PC-9 (cell line): ENCODE measurements at regions of chr5 and their contacts with region 1.

Region 1: GRCh38 chr5:154445422-154446182 is at the start of gene SAP30L:
- DNase-seq: peak; percentile 83 to 99
- H3K4me3 ChIP-seq: peak within 1 kb of the TSS; percentile 95
- H3K27ac ChIP-seq: no peak within 1 kb of the TSS
- H3K4me1 ChIP-seq: peaks cover 32% of the 10 kb centered on the region
- H3K27me3 ChIP-seq: no peaks in the 10 kb centered on the region
- CTCF ChIP-seq: no peak
- total RNA-seq, gene SAP30L: 42.8 and 53.0 TPM in 2 replicates

Region 2: DNA sequence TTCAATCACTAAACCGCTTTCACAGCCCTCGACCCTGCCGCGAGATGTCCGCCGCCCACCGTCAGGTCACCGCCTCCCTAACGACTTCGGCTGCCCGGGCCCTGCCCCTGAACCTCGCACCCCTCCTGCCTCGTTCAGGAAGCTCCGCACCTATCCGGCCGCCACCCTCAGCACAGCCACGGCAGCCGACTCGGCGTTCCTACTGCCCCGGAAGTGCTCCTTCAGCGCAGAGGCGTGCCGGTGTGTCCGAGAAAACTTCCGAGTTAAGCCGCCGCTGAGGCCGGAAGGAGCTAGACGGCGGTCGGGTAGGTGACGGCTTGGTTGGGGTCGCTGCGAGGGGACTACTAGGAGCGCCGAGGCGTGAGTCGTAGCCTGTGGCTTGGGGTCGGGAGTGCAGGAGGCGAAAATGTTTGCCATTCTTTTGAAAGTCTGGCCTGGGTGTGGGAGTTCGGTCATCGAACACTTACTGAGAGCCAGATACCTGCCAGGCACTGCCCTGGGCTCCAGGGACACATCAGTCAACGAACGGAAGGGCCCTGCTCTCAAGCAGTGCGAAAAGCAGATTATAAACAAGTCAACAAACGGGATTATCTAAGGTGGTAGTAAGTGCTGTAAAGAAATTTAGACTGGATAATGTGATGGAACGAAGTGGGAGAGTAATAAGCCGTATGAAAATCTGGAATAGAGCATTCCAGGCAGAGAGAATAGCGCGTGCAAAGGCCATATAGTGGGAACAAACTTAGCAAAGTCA is 406.7 kb before region 1 on chr5 and contains the starts of genes FAM114A2 and MFAP3:
- CTCF ChIA-PET with region 1: no interaction called
- POLR2A ChIA-PET with region 1: no interaction called
- intact Hi-C with region 1: loop called (anchors 1 kb)
- DNase-seq: peak; percentile 84 to 90
- H3K4me3 ChIP-seq: peak within 1 kb of the TSS; percentile 85
- H3K27ac ChIP-seq: peak within 1 kb of the TSS; percentile 52
- H3K4me1 ChIP-seq: peaks cover 20% of the 10 kb centered on the region
- H3K27me3 ChIP-seq: no peaks in the 10 kb centered on the region
- CTCF ChIP-seq: no peak
- total RNA-seq, gene FAM114A2: 17.1 and 18.9 TPM in 2 replicates
- total RNA-seq, gene MFAP3: 24.4 and 29.3 TPM in 2 replicates

Region 3: DNA sequence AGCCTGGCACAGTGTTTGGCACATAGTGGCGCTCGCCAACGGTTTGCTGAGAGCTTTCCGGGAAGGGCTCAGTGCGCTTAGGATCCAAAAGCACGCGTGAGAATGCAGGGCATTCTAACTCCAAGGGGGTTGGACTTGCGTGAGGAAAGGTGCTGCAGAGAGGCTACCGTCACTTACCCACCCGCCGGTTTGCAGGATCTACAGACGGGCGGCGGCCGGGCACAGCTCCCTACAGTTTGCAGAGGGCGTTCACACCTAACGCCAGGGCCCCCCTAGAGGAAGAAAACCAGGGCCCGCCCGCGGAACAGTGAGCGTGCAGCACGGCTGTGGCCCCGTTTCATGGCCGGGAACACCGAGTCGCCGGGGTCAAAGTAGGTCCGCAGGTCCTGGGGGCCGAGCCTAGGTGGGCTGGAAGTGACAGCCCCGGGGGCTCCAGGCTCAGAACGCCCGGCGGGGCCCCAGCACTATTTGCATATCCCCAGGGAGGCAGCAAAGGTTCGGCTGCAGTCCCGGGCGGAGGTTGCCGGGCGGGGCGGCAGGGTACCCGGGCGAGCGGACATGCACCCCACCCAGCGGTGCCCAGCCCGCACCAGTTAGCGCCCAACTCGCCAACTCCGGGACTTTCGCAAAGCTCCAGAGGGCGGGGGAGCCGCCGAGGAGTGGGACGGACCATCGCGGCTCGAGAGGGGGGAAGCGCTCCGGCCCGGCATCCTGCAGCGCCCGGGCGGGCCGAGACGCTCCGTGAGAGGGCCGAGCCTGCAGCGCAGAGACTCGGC is 255.6 kb before region 1 on chr5:
- CTCF ChIA-PET with region 1: no interaction called
- POLR2A ChIA-PET with region 1: no interaction called
- intact Hi-C with region 1: loop called (anchors 2 kb)
- DNase-seq: peak; percentile 60 to 86
- H3K4me3 ChIP-seq: peak overlapping the region; percentile 73
- H3K27ac ChIP-seq: peak overlapping the region; percentile 56; the same call in 1 of the 2 replicates
- H3K4me1 ChIP-seq: peaks cover 44% of the 10 kb centered on the region
- H3K27me3 ChIP-seq: no peaks in the 10 kb centered on the region
- CTCF ChIP-seq: peak; percentile 54; the same call in 1 of the 2 replicates

Region 4: DNA sequence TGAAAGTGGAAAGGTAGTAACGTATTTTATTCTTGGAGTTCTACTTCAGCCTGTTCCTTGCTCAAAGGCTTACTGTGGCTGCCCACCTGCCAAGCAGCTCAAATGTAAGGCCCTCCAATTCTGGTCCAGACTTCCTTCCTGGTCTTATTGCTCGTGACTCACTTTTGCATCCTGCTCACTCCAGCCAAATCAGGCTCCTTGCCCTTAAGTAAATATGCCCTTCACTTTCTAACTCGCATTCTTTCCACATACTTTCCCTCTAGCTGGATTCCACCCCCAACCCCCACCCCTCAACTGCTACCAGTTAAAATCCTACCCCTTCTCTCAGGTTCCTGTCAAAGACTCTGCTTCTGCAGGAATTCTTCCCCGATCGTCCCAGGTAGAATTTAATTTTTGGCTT is 158.5 kb before region 1 on chr5:
- CTCF ChIA-PET with region 1: no interaction called
- POLR2A ChIA-PET with region 1: no interaction called
- intact Hi-C with region 1: loop called (anchors 5 kb)
- DNase-seq: peak; percentile 65 to 93
- H3K4me3 ChIP-seq: peak overlapping the region; percentile 27; the same call in 1 of the 2 replicates
- H3K27ac ChIP-seq: peak overlapping the region; percentile 71
- H3K4me1 ChIP-seq: peaks cover 64% of the 10 kb centered on the region
- H3K27me3 ChIP-seq: no peaks in the 10 kb centered on the region
- CTCF ChIP-seq: no peak

Region 5: DNA sequence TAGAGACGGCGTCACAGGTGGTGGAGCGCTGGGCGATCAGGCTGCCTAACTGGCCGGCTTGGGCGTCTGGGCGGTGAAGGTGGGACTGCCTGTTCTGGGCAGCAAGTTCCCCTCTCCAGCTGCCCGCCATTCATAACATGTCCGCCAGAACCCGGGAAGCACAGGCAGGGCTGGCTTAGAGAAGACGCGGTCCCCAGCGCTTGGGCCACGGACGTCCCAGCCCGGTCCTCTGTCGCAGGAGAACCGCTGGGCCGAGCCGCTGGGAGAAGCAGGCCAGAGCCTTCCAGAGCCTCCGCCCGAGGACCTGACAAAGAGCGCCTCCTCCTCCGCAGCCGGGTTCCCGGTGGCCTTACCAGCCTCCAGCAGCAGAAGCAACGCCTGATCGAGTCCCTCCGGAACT is 47.7 kb after region 1 on chr5:
- CTCF ChIA-PET with region 1: no interaction called
- POLR2A ChIA-PET with region 1: no interaction called
- intact Hi-C with region 1: no loop called
- DNase-seq: no peak
- H3K4me3 ChIP-seq: no peak overlapping the region
- H3K27ac ChIP-seq: no peak overlapping the region
- H3K4me1 ChIP-seq: no peaks in the 10 kb centered on the region
- H3K27me3 ChIP-seq: peaks cover 6% of the 10 kb centered on the region; the same call in 1 of the 2 replicates
- CTCF ChIP-seq: no peak

Region 6: GRCh38 chr5:154754460-154755360 is 309.1 kb after region 1 on chr5:
- CTCF ChIA-PET with region 1: no interaction called
- POLR2A ChIA-PET with region 1: no interaction called
- intact Hi-C with region 1: loop called (anchors 5 kb)
- DNase-seq: peak; percentile 96 to 100
- H3K4me3 ChIP-seq: peak overlapping the region; percentile 77
- H3K27ac ChIP-seq: peak overlapping the region; percentile 95
- H3K4me1 ChIP-seq: peaks cover 33% of the 10 kb centered on the region
- H3K27me3 ChIP-seq: no peaks in the 10 kb centered on the region
- CTCF ChIP-seq: no peak; the same call in 1 of the 2 replicates